A549 (cell line): ENCODE measurements at regions of chr11 and their contacts with region 1.

Region 1: DNA sequence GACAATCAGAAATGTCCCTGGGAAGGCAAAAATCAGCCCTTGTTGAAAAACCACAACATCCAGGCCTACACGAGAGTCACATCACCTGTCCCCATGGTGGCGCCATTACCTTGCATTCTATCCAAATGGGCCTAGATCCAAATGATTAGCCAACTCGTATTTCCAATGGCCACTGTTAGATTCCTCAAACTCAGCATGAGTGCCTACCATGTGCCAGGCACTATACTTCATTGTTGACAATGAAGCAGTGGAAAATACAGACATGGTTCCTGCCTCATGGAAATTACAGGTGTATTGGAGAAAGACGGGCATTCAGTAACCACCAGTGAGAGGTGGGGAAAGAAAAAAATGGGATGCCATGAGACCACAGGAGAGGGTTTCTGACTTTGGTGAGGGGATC is 29.8 kb upstream of the CREB3L1 start:
- DNase-seq: peak; percentile 46 to 81
- ATAC-seq: peak in 1 of 2 experiments; percentile 10; a peak in 2 of 6 replicates
- H3K4me3 ChIP-seq: no peak overlapping the region
- H3K27ac ChIP-seq: peak overlapping the region; percentile 68 to 82; a peak in 4 of 6 replicates
- H3K4me1 ChIP-seq: peaks cover 45% of the 10 kb centered on the region
- CTCF ChIP-seq: peak; percentile 63
- EP300 ChIP-seq: no peak
- POLR2A ChIP-seq: no peak
- RAD21 ChIP-seq: peak; percentile 79 to 90

Region 2: DNA sequence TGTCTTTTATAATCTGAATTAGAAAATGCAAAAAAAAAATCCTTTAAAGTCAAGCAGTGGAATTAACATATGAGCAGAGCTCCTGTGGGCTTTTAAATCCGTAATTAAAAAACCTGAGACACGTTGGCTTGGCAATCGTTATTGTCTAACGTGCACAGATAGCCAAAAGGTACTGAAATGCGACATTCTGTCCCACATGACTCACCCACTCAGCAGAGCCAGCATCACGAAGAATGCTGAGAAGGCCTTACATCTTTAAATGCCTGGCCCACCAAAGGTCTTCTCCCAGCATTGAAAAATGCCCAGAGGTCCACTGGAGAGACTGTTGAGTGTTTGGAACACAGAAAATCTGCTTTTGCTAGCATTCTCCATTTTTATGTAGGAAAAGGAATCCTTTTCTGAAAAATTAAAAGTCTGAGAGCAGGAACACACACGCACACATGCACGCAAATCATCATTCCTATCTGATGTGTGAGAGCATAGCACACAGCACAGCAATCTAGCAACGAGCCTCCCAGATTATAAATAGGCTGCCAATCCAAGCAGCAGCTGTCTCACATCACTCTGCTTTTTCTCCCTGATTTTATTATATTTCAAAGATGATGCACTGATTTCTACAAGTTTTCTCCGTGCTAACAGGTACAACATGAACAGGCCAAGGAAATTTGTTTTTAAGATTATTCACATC is 220.9 kb before region 1 on chr11:
- CTCF ChIA-PET with region 1: no interaction called
- POLR2A ChIA-PET with region 1: no interaction called
- DNase-seq: no peak
- ATAC-seq: no peak
- H3K4me3 ChIP-seq: no peak overlapping the region
- H3K27ac ChIP-seq: no peak overlapping the region
- H3K4me1 ChIP-seq: no peaks in the 10 kb centered on the region
- CTCF ChIP-seq: no peak
- EP300 ChIP-seq: no peak
- POLR2A ChIP-seq: no peak
- RAD21 ChIP-seq: no peak

Region 3: DNA sequence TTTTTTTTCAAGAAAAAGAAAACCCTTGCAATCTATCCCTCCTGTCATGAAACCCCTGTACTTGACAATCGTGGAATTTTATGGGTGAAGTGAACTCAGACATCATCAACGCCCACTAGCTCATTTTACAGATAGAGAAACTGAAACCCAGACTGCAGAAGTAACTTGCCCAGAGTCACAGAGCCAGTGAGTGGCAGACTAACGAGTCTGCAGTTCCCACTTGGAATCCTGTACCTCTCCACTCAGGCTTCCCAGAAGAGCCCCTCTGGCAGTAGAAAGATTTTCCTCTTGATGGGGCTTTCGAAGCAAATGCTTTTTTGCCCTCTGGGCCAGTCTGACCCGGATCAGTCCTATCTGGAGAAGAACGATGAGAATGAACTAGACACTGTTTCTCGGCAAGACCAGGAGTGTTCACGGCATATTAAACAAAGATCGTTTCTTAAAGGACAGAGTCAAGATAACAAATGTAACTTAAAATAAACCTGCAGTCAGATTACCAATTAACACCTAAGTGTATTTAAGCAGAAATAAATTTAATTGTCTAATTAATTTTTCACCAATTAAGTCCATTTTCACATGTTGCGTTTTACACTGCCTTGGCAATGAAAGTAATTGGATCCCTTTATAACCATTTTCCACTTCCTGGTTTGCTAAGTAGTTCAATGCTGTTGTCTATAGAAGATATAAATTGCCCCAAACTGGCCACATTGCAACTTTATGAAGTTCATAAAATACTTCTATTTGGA is 31.5 kb before region 1 on chr11:
- CTCF ChIA-PET with region 1: no interaction called
- POLR2A ChIA-PET with region 1: no interaction called
- DNase-seq: no peak
- ATAC-seq: no peak
- H3K4me3 ChIP-seq: no peak overlapping the region
- H3K27ac ChIP-seq: no peak overlapping the region
- H3K4me1 ChIP-seq: no peaks in the 10 kb centered on the region
- CTCF ChIP-seq: no peak
- EP300 ChIP-seq: no peak
- POLR2A ChIP-seq: no peak
- RAD21 ChIP-seq: no peak

Region 4: GRCh38 chr11:46338988-46339666 is 91.5 kb after region 1 on chr11:
- CTCF ChIA-PET with region 1: interaction called, 3 read pairs
- POLR2A ChIA-PET with region 1: interaction called, 10 read pairs
- DNase-seq: no peak
- ATAC-seq: peak in 1 of 2 experiments; percentile 58; a peak in 3 of 6 replicates
- H3K4me3 ChIP-seq: no peak overlapping the region
- H3K27ac ChIP-seq: peak overlapping the region in 1 of 2 experiments; percentile 52; a peak in 4 of 6 replicates
- H3K4me1 ChIP-seq: peaks cover 14% of the 10 kb centered on the region
- CTCF ChIP-seq: no peak
- EP300 ChIP-seq: no peak
- POLR2A ChIP-seq: no peak
- RAD21 ChIP-seq: no peak

Region 5: DNA sequence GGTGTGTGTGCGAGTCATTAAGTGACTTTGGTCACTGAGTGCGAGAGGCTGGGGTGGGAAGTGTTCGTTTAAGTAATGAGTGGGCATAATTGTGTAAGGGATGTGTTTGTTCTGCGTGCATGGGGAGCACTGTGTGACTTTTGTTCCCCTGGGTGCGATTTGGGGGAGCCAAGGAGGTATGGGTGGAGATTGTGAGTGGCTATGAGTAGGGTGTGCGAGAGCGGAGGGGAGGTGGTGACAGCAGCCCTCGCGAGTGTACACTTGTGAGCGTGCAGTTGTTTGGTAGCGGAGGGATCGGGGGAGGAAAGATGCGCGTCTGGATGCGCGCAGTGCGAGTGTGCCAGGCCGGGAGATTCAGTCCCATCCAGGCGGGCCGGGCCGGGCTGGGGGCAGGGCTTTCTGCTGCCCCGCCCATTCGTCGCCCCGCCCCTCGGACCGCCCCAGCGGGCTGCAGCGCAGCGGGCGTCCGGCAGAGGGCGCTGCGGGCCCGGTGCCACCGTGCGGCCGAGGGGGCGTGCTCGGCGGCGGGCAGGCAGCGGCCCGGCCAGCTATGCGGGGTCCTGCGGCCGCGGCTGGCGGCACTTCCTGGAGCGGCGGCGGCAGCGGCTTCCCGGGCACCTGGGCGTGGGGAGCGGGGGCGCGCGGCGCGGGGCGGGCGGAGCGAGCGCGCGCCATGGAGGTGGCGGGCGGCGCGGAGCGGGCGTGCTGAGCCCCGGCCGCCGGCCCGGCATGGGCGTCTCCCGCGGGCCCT is 99.4 kb after region 1 on chr11 and contains the start of gene DGKZ:
- CTCF ChIA-PET with region 1: interaction called, 13 read pairs
- POLR2A ChIA-PET with region 1: interaction called, 4 read pairs
- DNase-seq: peak; percentile 81 to 82
- ATAC-seq: peak; percentile 83 to 85
- H3K4me3 ChIP-seq: peak within 1 kb of the TSS; percentile 84
- H3K27ac ChIP-seq: peak within 1 kb of the TSS; percentile 77 to 96
- H3K4me1 ChIP-seq: peaks cover 16% of the 10 kb centered on the region
- CTCF ChIP-seq: peak; percentile 98
- EP300 ChIP-seq: no peak
- POLR2A ChIP-seq: peak; percentile 49
- RAD21 ChIP-seq: peak; percentile 17 to 52; a peak in 3 of 5 replicates
- polyA plus RNA-seq, gene DGKZ: 12.8 and 14.5 TPM in 2 replicates

Region 6: DNA sequence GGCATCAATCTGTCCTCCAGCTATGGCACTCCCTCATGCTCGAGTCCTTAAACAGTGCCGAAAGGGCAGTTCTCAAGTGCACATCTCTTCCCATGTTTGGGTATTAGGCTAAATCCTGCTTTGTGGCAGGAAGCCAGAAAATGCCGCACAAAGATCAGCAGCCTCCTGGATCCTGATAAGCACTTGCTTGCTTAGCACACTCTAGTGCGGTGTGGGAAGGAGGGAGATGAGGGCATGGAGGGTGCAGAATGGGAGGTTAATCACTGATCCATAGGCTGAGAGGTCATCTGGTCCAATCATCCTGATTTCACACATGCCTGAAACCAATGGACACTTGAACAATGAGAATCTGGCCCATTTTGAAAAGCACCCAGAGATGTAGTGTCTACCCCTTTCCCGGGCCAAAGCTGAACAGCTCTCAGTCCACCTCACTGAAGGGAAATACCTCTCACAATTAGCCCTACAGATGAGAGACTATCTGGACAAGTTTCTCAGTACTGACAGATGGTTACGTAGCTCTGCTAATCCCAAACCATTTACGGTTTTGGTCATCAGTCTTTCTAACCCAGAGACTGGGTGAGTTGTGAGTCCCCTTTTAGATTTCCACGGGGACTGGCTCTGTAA is 173.7 kb after region 1 on chr11:
- CTCF ChIA-PET with region 1: no interaction called
- POLR2A ChIA-PET with region 1: no interaction called
- DNase-seq: no peak
- ATAC-seq: no peak
- H3K4me3 ChIP-seq: no peak overlapping the region
- H3K27ac ChIP-seq: no peak overlapping the region
- H3K4me1 ChIP-seq: no peaks in the 10 kb centered on the region
- CTCF ChIP-seq: no peak
- EP300 ChIP-seq: no peak
- POLR2A ChIP-seq: no peak
- RAD21 ChIP-seq: no peak